ENCODE measurements at regions of chr6 and their contacts with region 1.

Region 1: GRCh38 chr6:144171406-144171805 is 21.1 kb downstream of the STX11 start:
- DNase-seq: no peak
- H3K4me3 ChIP-seq: no peak overlapping the region
- H3K27ac ChIP-seq: no peak overlapping the region
- H3K4me1 ChIP-seq: no peaks in the 10 kb centered on the region
- H3K27me3 ChIP-seq: no peaks in the 10 kb centered on the region
- CTCF ChIP-seq: no peak
- POLR2A ChIP-seq: no peak

Region 2: GRCh38 chr6:143721642-143722041 is 449.8 kb before region 1 on chr6:
- intact Hi-C with region 1: loop called (anchors 5 kb)
- DNase-seq: no peak
- H3K4me3 ChIP-seq: no peak overlapping the region
- H3K27ac ChIP-seq: no peak overlapping the region
- H3K4me1 ChIP-seq: no peaks in the 10 kb centered on the region
- H3K27me3 ChIP-seq: no peaks in the 10 kb centered on the region
- CTCF ChIP-seq: no peak
- POLR2A ChIP-seq: no peak

Region 3: GRCh38 chr6:144510859-144511258 is 339.5 kb after region 1 on chr6:
- intact Hi-C with region 1: no loop called
- DNase-seq: no peak
- H3K4me3 ChIP-seq: no peak overlapping the region
- H3K27ac ChIP-seq: no peak overlapping the region
- H3K4me1 ChIP-seq: no peaks in the 10 kb centered on the region
- H3K27me3 ChIP-seq: no peaks in the 10 kb centered on the region
- CTCF ChIP-seq: no peak
- POLR2A ChIP-seq: no peak